ENCODE measurements at regions of chr11 and their contacts with region 1.

Region 1: DNA sequence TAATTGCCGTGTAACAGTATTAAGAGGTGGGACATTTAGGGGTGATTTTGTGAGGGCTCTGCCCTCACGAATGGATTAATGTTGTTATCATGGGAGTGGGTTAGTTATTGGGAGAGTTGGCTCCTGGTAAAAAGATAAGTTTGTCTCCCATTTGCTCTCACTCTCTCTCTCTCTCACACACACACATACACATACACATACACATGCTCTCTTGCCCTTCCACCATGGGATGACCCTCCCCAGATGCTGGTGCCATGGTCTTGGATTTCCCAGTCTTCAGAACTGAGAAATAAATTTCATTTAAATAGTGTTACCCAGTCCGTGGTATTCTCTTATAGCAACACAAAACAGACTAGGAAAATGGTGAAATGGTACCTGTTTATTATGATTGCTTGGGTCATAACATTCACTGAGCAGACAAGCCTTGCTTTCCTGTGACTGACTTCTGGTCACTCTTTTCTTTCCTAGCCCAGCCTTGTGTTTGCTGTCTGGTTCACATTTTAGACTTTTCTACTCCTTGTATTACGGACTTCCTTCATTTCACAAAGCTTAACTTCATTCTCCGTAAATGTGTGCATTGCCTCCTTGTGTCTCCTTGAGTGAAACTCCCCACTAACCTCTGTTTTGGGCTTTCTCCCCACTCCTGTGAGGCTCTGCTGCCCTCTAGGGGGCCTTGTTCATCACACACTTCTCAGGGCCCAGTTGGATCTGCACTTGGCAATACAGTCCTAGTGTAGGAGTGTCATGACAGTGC is 206.5 kb upstream of the CTSC start:
- DNase-seq: peak; percentile 56 to 74 (median 72)
- H3K4me3 ChIP-seq: no peak overlapping the region
- H3K4me3 Mint-ChIP-seq: peak overlapping the region in 1 of 8 donors; percentile 68
- H3K27ac ChIP-seq: no peak overlapping the region
- H3K27ac Mint-ChIP-seq: peak overlapping the region in 4 of 7 donors; percentile 2 to 44 (median 17)
- H3K4me1 ChIP-seq: no peaks in the 10 kb centered on the region
- H3K4me1 Mint-ChIP-seq: peaks cover 2 to 5% (median 4%) of the 10 kb centered on the region in 4 donors
- H3K27me3 ChIP-seq: no peaks in the 10 kb centered on the region
- H3K27me3 Mint-ChIP-seq: peaks cover 0 to 3% of the 10 kb centered on the region in 2 donors

Region 2: DNA sequence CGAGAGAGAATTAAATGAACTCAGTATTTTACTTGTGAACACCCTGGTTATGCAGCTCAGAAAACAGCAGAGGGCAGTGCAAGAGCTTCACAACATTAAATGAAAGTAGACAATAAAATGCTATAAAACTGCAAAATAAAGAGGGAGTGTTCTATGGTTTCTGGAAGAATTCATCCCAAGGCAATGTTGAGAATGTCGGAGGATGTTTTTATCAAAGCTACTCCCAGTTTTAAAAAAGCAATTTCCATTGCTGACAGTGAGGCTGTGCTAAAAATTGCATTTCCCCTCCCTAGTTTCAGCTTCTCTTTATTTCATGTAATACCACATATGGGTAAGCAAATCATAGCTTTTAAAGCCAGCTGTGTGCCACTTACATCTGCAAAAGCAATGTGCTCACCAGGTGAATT is 665.7 kb before region 1 on chr11:
- CTCF ChIA-PET with region 1: no interaction called
- POLR2A ChIA-PET with region 1: no interaction called
- intact Hi-C with region 1: loop called (anchors 2 kb)
- DNase-seq: no peak
- H3K4me3 ChIP-seq: no peak overlapping the region
- H3K4me3 Mint-ChIP-seq: no peak overlapping the region
- H3K27ac ChIP-seq: no peak overlapping the region
- H3K27ac Mint-ChIP-seq: no peak overlapping the region
- H3K4me1 ChIP-seq: no peaks in the 10 kb centered on the region
- H3K4me1 Mint-ChIP-seq: no peaks in the 10 kb centered on the region
- H3K27me3 ChIP-seq: no peaks in the 10 kb centered on the region
- H3K27me3 Mint-ChIP-seq: peaks cover 1 to 2% of the 10 kb centered on the region in 2 donors

Region 3: GRCh38 chr11:88016392-88017170 is 527.5 kb before region 1 on chr11:
- CTCF ChIA-PET with region 1: interaction called, 110 read pairs
- POLR2A ChIA-PET with region 1: no interaction called
- intact Hi-C with region 1: loop called (anchors 1 kb)
- DNase-seq: peak; percentile 52 to 61 (median 54)
- H3K4me3 ChIP-seq: no peak overlapping the region
- H3K4me3 Mint-ChIP-seq: no peak overlapping the region
- H3K27ac ChIP-seq: no peak overlapping the region
- H3K27ac Mint-ChIP-seq: no peak overlapping the region
- H3K4me1 ChIP-seq: no peaks in the 10 kb centered on the region
- H3K4me1 Mint-ChIP-seq: no peaks in the 10 kb centered on the region
- H3K27me3 ChIP-seq: no peaks in the 10 kb centered on the region
- H3K27me3 Mint-ChIP-seq: peaks cover 3 to 6% of the 10 kb centered on the region in 2 donors

Region 4: DNA sequence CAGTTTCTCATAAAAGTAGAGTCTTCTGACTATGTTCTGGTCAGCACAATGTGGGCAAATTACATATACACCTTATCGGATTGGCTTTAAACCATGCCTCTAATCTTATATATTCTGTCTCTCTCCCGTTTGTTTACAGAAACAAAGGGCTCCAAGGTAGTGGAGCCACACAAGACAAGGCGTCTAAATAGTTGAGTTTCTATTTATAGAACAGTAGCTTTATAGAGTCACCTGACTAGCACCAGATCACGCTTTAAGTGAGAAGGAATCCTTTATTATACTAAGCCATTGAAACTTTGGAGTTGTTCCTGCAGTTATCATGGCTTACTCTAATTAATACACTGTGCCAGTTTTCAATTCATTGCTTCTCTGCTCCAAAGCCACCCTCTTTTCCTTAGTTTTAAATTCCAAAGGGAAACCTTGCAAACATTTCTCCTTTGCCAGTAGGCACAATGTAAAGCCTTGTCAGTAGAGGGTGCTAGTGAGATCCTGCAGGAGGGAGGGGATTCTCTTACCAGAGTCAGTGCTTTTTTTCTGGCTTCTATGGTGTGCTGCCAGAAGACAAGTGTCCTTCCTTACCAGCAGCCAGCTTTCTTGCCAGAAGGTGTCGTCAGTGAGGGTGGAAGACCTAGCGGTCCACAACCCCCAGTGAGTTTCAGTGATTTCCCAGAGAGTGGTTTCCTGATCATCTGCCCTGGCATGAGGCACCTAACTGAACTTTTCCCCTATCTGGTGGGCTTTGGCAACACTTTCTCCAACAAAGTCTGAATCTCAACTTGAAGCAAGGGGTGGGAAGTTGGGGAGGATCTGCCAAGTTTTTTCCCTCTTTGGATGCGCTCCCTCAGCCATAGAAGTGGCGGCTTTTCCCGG is 440.5 kb before region 1 on chr11:
- CTCF ChIA-PET with region 1: interaction called, 6 read pairs
- POLR2A ChIA-PET with region 1: no interaction called
- intact Hi-C with region 1: loop called (anchors 1 kb)
- DNase-seq: peak in 4 of 5 donors; percentile 17 to 52 (median 38)
- H3K4me3 ChIP-seq: no peak overlapping the region
- H3K4me3 Mint-ChIP-seq: no peak overlapping the region
- H3K27ac ChIP-seq: no peak overlapping the region
- H3K27ac Mint-ChIP-seq: no peak overlapping the region
- H3K4me1 ChIP-seq: no peaks in the 10 kb centered on the region
- H3K4me1 Mint-ChIP-seq: no peaks in the 10 kb centered on the region
- H3K27me3 ChIP-seq: no peaks in the 10 kb centered on the region
- H3K27me3 Mint-ChIP-seq: peaks cover 5 to 7% of the 10 kb centered on the region in 2 donors

Region 5: DNA sequence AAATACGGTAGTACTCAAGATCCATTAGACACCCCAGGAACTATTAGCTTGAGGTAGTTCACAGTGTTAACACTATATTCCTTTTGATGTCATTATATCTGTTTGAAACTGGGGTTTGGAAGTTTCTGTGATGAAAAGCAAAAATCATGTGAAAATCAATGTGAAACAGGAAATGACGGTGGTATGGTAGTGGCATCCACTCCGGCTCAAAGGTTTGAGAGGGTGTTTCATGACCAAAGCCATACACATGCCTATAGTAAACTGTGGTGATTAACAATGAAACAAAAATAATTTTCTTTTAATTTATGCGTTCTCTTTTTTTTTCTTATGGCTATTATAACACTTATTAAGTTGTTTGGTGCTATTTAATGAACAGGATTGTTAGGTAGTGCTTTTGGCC is 379.8 kb before region 1 on chr11:
- CTCF ChIA-PET with region 1: no interaction called
- POLR2A ChIA-PET with region 1: no interaction called
- intact Hi-C with region 1: loop called (anchors 2 kb)
- DNase-seq: no peak
- H3K4me3 ChIP-seq: no peak overlapping the region
- H3K4me3 Mint-ChIP-seq: no peak overlapping the region
- H3K27ac ChIP-seq: no peak overlapping the region
- H3K27ac Mint-ChIP-seq: no peak overlapping the region
- H3K4me1 ChIP-seq: no peaks in the 10 kb centered on the region
- H3K4me1 Mint-ChIP-seq: peaks cover 0 to 2% (median 0%) of the 10 kb centered on the region in 4 donors
- H3K27me3 ChIP-seq: no peaks in the 10 kb centered on the region
- H3K27me3 Mint-ChIP-seq: peaks cover 0 to 2% of the 10 kb centered on the region in 2 donors

Region 6: DNA sequence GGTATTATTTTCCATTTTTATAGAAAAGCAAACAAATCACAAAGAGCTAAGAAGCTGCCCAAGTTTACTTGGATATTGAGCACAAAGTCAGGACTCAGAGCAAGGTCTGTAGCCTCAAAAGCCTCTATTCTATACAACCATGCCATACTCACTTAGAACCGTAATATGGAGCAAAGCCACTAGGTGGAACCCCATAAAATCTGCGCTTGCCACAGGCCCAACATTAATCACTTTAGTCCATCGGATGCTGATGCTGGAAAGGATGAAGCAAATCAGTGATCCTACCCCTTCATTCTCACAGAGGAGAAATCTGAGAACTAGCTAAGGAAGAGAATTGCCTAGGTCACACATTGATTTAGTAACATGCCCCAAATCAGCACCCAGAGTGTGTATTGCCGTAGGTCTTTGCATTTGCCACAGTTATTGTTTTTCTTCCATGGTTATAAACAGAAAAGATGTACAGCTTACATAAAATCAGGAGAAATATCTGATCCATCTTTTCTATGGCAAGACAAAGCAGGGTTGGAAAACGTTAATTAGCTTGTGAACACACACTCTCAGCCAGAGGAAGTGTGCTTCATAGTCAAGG is 312.1 kb before region 1 on chr11:
- CTCF ChIA-PET with region 1: interaction called, 39 read pairs
- POLR2A ChIA-PET with region 1: no interaction called
- intact Hi-C with region 1: loop called (anchors 1 kb)
- DNase-seq: peak in 3 of 5 donors; percentile 20 to 35 (median 22)
- H3K4me3 ChIP-seq: no peak overlapping the region
- H3K4me3 Mint-ChIP-seq: no peak overlapping the region
- H3K27ac ChIP-seq: no peak overlapping the region
- H3K27ac Mint-ChIP-seq: no peak overlapping the region
- H3K4me1 ChIP-seq: no peaks in the 10 kb centered on the region
- H3K4me1 Mint-ChIP-seq: no peaks in the 10 kb centered on the region
- H3K27me3 ChIP-seq: no peaks in the 10 kb centered on the region
- H3K27me3 Mint-ChIP-seq: no peaks in the 10 kb centered on the region

Region 7: GRCh38 chr11:88575916-88576315 is 31.8 kb after region 1 on chr11:
- CTCF ChIA-PET with region 1: no interaction called
- POLR2A ChIA-PET with region 1: no interaction called
- intact Hi-C with region 1: no loop called
- DNase-seq: no peak
- H3K4me3 ChIP-seq: no peak overlapping the region
- H3K4me3 Mint-ChIP-seq: no peak overlapping the region
- H3K27ac ChIP-seq: no peak overlapping the region
- H3K27ac Mint-ChIP-seq: no peak overlapping the region
- H3K4me1 ChIP-seq: no peaks in the 10 kb centered on the region
- H3K4me1 Mint-ChIP-seq: no peaks in the 10 kb centered on the region
- H3K27me3 ChIP-seq: no peaks in the 10 kb centered on the region
- H3K27me3 Mint-ChIP-seq: peaks cover 8 to 9% of the 10 kb centered on the region in 2 donors

Region 8: GRCh38 chr11:88596786-88597185 is 52.7 kb after region 1 on chr11:
- CTCF ChIA-PET with region 1: no interaction called
- POLR2A ChIA-PET with region 1: no interaction called
- intact Hi-C with region 1: no loop called
- DNase-seq: no peak
- H3K4me3 ChIP-seq: no peak overlapping the region
- H3K4me3 Mint-ChIP-seq: no peak overlapping the region
- H3K27ac ChIP-seq: no peak overlapping the region
- H3K27ac Mint-ChIP-seq: no peak overlapping the region
- H3K4me1 ChIP-seq: no peaks in the 10 kb centered on the region
- H3K4me1 Mint-ChIP-seq: peaks cover 0 to 6% (median 2%) of the 10 kb centered on the region in 4 donors
- H3K27me3 ChIP-seq: no peaks in the 10 kb centered on the region
- H3K27me3 Mint-ChIP-seq: peaks cover 0 to 1% of the 10 kb centered on the region in 2 donors

Region 9: GRCh38 chr11:88886796-88887195 is 342.7 kb after region 1 on chr11:
- CTCF ChIA-PET with region 1: interaction called, 5 read pairs
- POLR2A ChIA-PET with region 1: no interaction called
- intact Hi-C with region 1: loop called (anchors 2 kb)
- DNase-seq: peak in 4 of 5 donors; percentile 26 to 35 (median 31)
- H3K4me3 ChIP-seq: no peak overlapping the region
- H3K4me3 Mint-ChIP-seq: no peak overlapping the region
- H3K27ac ChIP-seq: no peak overlapping the region
- H3K27ac Mint-ChIP-seq: peak overlapping the region in 1 of 7 donors; percentile 33
- H3K4me1 ChIP-seq: no peaks in the 10 kb centered on the region
- H3K4me1 Mint-ChIP-seq: peaks cover 0 to 2% (median under 1%) of the 10 kb centered on the region in 4 donors
- H3K27me3 ChIP-seq: no peaks in the 10 kb centered on the region
- H3K27me3 Mint-ChIP-seq: no peaks in the 10 kb centered on the region

Measured in CD4-positive, alpha-beta memory T cell (primary cell).